PC-3 (cell line): ENCODE measurements at regions of chr6 and their contacts with region 1.

Region 1: GRCh38 chr6:149823013-149823412 is 41.1 kb downstream of the LRP11 start:
- DNase-seq: no peak
- ATAC-seq: no peak
- H3K4me3 ChIP-seq: no peak overlapping the region
- H3K27ac ChIP-seq: no peak overlapping the region
- H3K4me1 ChIP-seq: no peaks in the 10 kb centered on the region
- H3K27me3 ChIP-seq: no peaks in the 10 kb centered on the region
- CTCF ChIP-seq: no peak

Region 2: DNA sequence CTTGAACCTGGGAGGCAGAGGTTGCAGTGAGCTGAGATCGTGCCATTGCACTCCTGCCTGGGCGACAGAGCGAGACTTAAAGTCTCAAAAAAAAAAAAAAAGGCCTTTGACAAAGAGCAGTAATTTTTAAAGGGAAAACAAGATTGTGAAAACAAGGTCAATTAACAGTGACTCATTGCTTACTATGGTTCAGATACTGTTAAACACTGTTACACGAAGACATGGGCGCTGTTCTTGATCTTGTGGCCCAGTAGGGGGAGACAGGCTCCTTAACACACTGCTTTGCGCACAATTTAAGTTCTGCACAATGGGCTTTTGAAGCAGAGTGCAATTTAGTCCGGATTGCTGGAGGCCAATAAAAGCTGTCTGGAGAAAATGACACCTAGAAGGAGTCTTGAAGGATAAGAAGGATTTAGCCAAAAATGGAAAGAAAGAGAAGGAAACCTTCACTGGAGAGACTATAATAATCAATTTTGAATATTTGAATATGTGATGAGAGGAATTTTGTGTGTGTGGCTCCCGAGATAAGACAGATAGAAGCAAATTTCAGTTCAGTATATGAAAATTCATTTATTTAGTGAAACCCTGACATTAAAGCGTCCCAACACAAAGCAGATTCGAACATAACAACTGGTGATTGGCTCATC is 99.1 kb before region 1 on chr6:
- CTCF ChIA-PET with region 1: no interaction called
- POLR2A ChIA-PET with region 1: no interaction called
- intact Hi-C with region 1: loop called (anchors 10 kb)
- DNase-seq: peak; percentile 76
- ATAC-seq: peak; percentile 98
- H3K4me3 ChIP-seq: no peak overlapping the region
- H3K27ac ChIP-seq: no peak overlapping the region
- H3K4me1 ChIP-seq: no peaks in the 10 kb centered on the region
- H3K27me3 ChIP-seq: no peaks in the 10 kb centered on the region
- CTCF ChIP-seq: peak; percentile 84

Region 3: DNA sequence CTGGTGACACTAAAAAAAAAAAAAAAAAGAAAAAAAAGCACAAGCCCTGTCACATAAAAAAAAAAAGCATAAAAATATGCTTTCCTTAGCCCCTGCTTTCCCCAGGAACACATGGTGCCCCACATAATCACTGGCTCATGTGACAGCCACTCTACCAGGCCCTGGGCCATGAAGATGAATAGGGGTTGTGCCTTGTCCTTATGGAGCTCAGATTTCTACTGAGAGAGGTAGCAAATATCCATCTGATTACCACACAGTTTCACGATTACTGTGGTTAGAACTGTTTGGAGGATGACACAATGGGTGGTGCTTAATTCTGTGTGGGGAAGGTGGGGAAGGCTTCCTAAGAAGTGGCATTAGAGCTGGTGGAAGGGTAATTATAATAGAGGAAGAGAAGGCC is 65.6 kb after region 1 on chr6:
- CTCF ChIA-PET with region 1: no interaction called
- POLR2A ChIA-PET with region 1: interaction called, 15 read pairs
- intact Hi-C with region 1: no loop called
- DNase-seq: no peak
- ATAC-seq: no peak
- H3K4me3 ChIP-seq: no peak overlapping the region
- H3K27ac ChIP-seq: no peak overlapping the region
- H3K4me1 ChIP-seq: 0 out of 2 replicates have a peak, but pooled peaks cover 8% of the 10 kb centered on the region
- H3K27me3 ChIP-seq: no peaks in the 10 kb centered on the region
- CTCF ChIP-seq: no peak